WTC11 (cell line): ENCODE measurements at regions of chr10 and their contacts with region 1.

Region 1: DNA sequence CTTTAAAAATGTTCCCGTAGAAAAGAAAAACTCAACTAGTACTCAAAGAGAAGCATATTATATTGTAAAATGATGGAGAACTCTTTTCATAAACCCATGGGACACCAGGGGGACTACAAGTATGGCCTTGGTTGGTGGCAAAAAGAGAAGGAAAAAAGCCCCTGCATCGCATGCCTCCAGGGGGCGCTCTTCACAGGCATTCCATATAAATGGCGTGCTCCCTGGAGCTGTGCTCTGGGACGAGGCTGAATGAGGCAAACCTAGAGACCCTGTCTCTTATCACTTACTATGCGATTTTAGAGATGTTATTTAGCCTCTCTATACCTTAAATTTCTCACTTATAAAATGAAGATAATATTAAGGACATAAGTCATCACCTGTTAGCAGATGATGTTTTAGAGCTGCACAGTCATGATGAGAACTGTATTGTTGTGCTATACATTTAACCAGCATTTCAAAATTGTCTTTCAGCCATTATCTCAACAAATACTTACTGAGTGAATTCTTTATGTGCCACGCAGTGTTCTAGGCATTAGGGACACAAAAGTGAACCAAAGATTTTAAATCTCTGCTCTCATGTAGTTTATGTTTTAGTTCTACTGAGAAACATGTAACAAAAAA is 105.8 kb downstream of the ARHGAP21 start:
- DNase-seq: peak; percentile 83
- ATAC-seq: peak; percentile 95
- H3K4me3 Mint-ChIP-seq: no peak overlapping the region
- H3K27ac Mint-ChIP-seq: peak overlapping the region; percentile 29; the same call in 1 of the 2 replicates
- H3K4me1 Mint-ChIP-seq: no peaks in the 10 kb centered on the region
- H3K27me3 Mint-ChIP-seq: no peaks in the 10 kb centered on the region
- CTCF ChIP-seq: peak; percentile 93

Region 2: DNA sequence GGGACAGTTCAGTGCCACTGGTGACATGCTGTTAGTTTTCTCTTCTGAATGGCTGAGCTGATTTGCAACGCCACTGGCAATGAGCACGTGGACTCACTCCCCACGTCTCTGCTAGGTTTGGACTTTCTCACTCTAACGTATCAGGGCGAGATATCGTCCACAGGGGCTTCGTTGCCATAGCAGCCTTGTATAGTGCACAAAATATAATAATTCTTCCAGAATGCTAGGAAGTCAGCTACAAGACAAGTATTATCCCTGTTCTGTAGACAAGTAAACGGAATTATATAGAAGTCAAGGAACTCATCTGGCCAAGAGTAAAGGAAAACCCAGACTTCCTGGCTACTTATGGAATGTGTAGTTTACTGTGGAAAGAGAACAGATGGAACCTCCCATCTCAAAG is 121.0 kb before region 1 on chr10:
- CTCF ChIA-PET with region 1: no interaction called
- POLR2A ChIA-PET with region 1: no interaction called
- DNase-seq: no peak
- ATAC-seq: no peak
- H3K4me3 Mint-ChIP-seq: no peak overlapping the region
- H3K27ac Mint-ChIP-seq: no peak overlapping the region
- H3K4me1 Mint-ChIP-seq: peaks cover 22% of the 10 kb centered on the region
- H3K27me3 Mint-ChIP-seq: no peaks in the 10 kb centered on the region
- CTCF ChIP-seq: no peak

Region 3: DNA sequence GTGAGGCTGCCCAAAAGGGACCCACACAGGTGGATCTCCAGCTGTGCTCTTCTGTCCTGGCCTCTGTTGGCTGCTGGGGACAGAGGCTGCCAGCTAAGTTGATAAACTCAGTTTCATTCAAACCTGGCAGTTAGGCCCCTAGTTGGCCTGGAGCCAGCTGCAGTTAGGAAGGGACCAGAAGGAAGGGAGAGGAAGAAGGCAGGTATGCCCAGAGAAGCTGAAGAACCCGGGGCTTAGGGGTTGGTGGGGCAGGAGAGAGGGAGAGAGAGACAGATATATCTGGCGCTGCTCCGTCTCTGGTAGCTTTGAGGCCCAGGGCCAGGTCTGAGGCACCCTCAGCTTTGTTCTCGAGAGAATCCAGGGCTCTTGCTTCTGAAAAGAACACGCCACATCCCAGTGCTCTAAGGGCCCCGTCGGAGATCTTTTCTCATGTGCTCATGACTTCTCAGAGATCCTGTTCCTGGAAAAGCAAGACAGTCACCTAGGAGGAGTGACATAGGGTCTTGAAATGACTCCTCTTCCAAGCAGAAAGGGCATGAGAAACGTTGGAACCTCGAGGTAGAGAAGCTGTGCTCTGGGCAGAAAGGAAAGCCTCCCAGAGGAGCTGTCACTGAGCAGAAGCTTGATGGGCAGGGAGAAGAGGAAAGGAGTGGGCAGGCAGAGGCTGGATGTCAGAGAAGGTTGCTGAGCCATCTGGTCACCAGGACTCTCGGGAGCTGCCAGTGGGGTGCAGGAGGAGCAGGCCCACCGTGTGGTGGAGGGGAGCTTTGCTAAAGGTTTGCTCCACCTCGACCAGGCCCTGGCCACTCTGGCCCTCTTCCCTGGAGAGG is 47.8 kb before region 1 on chr10:
- CTCF ChIA-PET with region 1: interaction called, 11 read pairs
- POLR2A ChIA-PET with region 1: no interaction called
- DNase-seq: no peak
- ATAC-seq: no peak
- H3K4me3 Mint-ChIP-seq: no peak overlapping the region
- H3K27ac Mint-ChIP-seq: no peak overlapping the region
- H3K4me1 Mint-ChIP-seq: peaks cover 7% of the 10 kb centered on the region
- H3K27me3 Mint-ChIP-seq: no peaks in the 10 kb centered on the region
- CTCF ChIP-seq: no peak

Region 4: GRCh38 chr10:24579906-24580305 is 38.0 kb before region 1 on chr10:
- CTCF ChIA-PET with region 1: interaction called, 15 read pairs
- POLR2A ChIA-PET with region 1: interaction called, 3 read pairs
- DNase-seq: no peak
- ATAC-seq: peak; percentile 96
- H3K4me3 Mint-ChIP-seq: no peak overlapping the region
- H3K27ac Mint-ChIP-seq: peak overlapping the region; percentile 34
- H3K4me1 Mint-ChIP-seq: peaks cover 16% of the 10 kb centered on the region
- H3K27me3 Mint-ChIP-seq: no peaks in the 10 kb centered on the region
- CTCF ChIP-seq: no peak

Region 5: DNA sequence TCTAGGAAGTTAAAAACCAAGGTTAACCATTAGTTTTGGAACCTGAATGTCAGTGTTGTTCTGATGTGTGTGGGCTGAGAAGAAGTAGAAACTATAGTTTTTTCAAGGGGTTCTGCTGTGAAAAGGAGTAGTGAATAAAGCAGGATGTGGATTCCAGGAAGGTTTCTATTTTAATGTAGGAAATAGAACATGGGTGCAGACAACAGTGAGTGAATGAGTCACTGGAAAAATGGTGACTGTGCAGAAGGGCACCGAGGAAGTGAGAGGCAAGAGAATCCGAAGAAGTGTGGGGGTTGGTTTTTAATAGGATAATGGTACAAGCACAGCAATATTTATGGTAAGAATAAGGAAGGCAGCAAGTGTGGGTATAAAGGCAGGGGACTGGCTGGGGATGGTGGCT is 14.5 kb before region 1 on chr10:
- CTCF ChIA-PET with region 1: interaction called, 15 read pairs
- POLR2A ChIA-PET with region 1: no interaction called
- DNase-seq: no peak
- ATAC-seq: no peak
- H3K4me3 Mint-ChIP-seq: no peak overlapping the region
- H3K27ac Mint-ChIP-seq: no peak overlapping the region
- H3K4me1 Mint-ChIP-seq: peaks cover 7% of the 10 kb centered on the region
- H3K27me3 Mint-ChIP-seq: no peaks in the 10 kb centered on the region
- CTCF ChIP-seq: no peak